CD4-positive, alpha-beta memory T cell (primary cell): ENCODE measurements at regions of chr4 and their contacts with region 1.

Region 1: DNA sequence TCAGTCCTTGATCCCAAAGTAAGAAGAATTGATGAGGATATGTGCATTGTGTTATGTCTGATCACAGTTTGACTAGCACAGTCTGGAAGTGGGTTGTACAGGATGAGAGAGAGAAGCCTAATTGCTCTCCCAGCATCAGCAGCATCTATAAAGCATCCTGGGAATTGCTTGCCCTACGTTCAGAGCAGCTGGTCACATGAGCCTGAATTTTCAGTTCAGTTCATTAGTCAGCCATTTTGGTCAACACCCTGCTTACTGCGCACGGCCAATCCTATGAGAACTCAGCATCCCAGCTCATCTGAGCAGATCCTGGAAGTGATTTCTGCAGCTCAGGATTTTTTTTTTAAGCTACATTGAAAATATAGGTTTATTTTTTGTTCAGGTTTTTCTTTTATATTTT is at the start of gene RUFY3:
- DNase-seq: no peak
- H3K4me3 ChIP-seq: no peak within 1 kb of the TSS
- H3K4me3 Mint-ChIP-seq: peak within 1 kb of the TSS; percentile 20 to 72 (median 54)
- H3K27ac ChIP-seq: no peak within 1 kb of the TSS
- H3K27ac Mint-ChIP-seq: peak within 1 kb of the TSS; percentile 67 to 86 (median 76)
- H3K4me1 ChIP-seq: peaks cover 17% of the 10 kb centered on the region
- H3K4me1 Mint-ChIP-seq: peaks cover 14 to 20% (median 15%) of the 10 kb centered on the region in 4 donors
- H3K27me3 ChIP-seq: no peaks in the 10 kb centered on the region
- H3K27me3 Mint-ChIP-seq: no peaks in the 10 kb centered on the region
- total RNA-seq, gene RUFY3: 36.2 TPM

Region 2: GRCh38 chr4:70704331-70705145 is 17.2 kb before region 1 on chr4:
- CTCF ChIA-PET with region 1: interaction called, 16 read pairs
- POLR2A ChIA-PET with region 1: interaction called, 31 read pairs
- intact Hi-C with region 1: loop called (anchors 2 kb)
- DNase-seq: peak; percentile 43 to 73 (median 49)
- H3K4me3 ChIP-seq: peak overlapping the region; percentile 32 to 71
- H3K4me3 Mint-ChIP-seq: peak overlapping the region; percentile 87 to 96 (median 91)
- H3K27ac ChIP-seq: peak overlapping the region; percentile 79
- H3K27ac Mint-ChIP-seq: peak overlapping the region; percentile 89 to 97 (median 95)
- H3K4me1 ChIP-seq: peaks cover 28% of the 10 kb centered on the region
- H3K4me1 Mint-ChIP-seq: peaks cover 17 to 29% (median 21%) of the 10 kb centered on the region in 4 donors
- H3K27me3 ChIP-seq: no peaks in the 10 kb centered on the region
- H3K27me3 Mint-ChIP-seq: no peaks in the 10 kb centered on the region